GM13976 (cell line): ENCODE measurements at regions of chr9 and their contacts with region 1.

Region 1: GRCh38 chr9:124291801-124292396 is 34.1 kb downstream of the NEK6 start:
- DNase-seq: peak; percentile 85
- CTCF ChIP-seq: peak; percentile 22

Region 2: DNA sequence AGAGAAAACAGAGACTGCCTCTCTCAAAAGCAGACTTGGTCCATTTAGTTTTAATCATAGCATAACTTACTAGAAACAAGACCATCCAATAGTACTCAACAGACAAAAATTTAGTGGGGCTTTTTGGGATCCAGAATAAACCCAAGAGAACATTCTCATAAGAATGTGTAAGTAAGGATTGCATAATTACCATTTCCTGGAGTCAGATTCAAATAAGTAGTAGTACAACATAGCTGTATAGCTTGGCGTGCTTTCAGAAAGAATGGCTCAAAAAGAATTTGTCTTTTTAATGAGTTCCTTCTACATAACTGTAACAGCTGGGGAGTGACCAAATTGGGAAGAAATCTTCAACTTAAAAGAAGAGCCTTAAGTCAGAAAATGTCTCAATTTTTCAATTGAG is 507.4 kb before region 1 on chr9:
- in situ Hi-C with region 1: no loop called
- DNase-seq: no peak
- CTCF ChIP-seq: no peak

Region 3: DNA sequence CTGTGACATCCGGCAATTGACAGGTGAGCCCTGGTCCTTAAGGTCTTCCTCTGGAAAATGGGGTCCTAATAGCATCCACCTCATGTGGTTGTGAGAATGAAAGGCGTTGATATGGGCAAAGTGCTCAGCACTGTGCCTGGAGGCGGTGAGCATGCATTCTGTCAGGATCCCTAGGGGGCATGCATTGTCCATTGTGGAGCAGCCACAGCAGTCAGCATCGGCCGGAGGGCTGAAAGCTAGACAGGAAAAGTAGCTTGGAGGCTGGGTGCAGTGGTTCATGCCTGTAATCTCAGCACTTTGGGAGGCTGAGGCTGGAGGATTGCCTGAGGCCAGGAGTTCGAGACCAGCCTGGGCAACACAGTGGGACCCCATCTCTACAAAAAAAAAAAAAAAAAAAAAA is 158.2 kb before region 1 on chr9:
- in situ Hi-C with region 1: loop called (anchors 10 kb)
- DNase-seq: no peak
- CTCF ChIP-seq: peak; percentile 61

Region 4: GRCh38 chr9:124551472-124552272 is 259.8 kb after region 1 on chr9:
- in situ Hi-C with region 1: no loop called
- DNase-seq: peak; percentile 38
- CTCF ChIP-seq: peak; percentile 27